Heart right ventricle (tissue), 16 donors: ENCODE measurements at regions of chr4 and their contacts with region 1.

Region 1: DNA sequence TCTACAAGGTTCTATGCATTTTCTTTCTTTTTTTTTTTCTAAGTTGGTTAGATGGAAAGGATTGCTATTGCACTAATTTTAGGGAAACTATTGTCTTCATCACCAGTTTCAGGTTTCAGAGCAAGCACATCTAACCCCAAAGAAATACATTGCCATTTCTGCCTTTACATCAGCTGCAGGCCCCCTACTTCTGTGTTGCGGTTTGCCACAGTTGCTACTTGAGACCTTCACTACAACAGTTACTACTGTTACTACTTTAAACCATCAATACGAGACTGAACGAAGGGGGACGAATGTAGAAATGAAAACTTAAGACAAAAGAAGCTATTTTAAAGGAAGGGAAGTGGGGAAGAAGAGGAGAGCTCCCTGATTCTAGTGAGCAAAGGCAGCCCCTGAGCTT is 256.7 kb upstream of the LCORL start:
- DNase-seq: no peak
- ATAC-seq: no peak
- H3K4me3 ChIP-seq: no peak overlapping the region
- H3K27ac ChIP-seq: no peak overlapping the region
- H3K4me1 ChIP-seq: no peaks in the 10 kb centered on the region
- H3K27me3 ChIP-seq: no peaks in the 10 kb centered on the region
- CTCF ChIP-seq: no peak

Region 2: GRCh38 chr4:18241727-18242126 is 36.5 kb before region 1 on chr4:
- intact Hi-C with region 1: loop called in 1 of 10 experiments (anchors 2 kb)
- DNase-seq: no peak
- ATAC-seq: no peak
- H3K4me3 ChIP-seq: no peak overlapping the region
- H3K27ac ChIP-seq: no peak overlapping the region
- H3K4me1 ChIP-seq: no peaks in the 10 kb centered on the region
- H3K27me3 ChIP-seq: no peaks in the 10 kb centered on the region
- CTCF ChIP-seq: no peak

Region 3: GRCh38 chr4:18366892-18367291 is 88.6 kb after region 1 on chr4:
- intact Hi-C with region 1: no loop called
- DNase-seq: no peak
- ATAC-seq: peak in 4 of 8 donors; percentile 15 to 53 (median 46)
- H3K4me3 ChIP-seq: no peak overlapping the region
- H3K27ac ChIP-seq: no peak overlapping the region
- H3K4me1 ChIP-seq: no peaks in the 10 kb centered on the region
- H3K27me3 ChIP-seq: no peaks in the 10 kb centered on the region
- CTCF ChIP-seq: peak in 8 of 9 donors; percentile 7 to 55 (median 50)

Region 4: DNA sequence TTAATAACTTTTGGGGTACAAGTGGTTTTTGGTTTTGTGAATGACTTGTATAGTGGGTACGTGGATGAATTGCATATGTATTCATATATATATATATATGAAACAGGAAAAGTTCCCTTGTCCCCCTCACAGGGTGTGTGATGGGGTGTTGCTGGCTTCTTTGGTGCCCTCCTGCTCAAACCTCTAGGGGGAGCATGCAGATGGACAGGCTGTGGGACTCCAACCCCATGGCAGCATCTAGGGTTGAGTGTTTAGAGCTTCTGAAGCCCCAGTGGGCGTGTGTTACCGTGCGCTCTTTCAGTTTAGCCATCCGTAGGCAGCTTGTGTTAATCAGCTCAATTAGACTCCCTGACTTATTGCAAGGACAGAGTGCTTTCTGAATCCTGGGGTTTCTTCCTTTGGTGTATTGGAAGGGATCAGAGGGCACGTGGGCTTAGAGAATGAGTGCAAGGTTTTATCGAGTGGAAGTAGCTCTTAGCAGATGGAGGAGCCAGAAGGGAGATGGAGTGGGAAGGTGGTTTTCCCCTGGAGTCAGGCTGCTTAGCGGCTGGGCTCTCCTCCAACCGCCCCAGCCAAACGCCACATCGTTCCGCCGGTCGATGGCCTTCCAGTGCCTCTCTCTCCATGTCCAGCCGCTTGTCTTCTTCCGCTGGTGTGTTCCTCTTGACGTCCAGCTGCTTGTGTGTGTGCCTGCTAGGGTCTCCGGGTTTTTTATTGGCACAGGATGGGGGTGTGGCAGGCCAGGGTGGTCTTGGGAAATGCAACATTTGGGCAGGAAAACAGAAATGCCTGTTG is 417.7 kb after region 1 on chr4:
- intact Hi-C with region 1: no loop called
- DNase-seq: no peak
- ATAC-seq: no peak
- H3K4me3 ChIP-seq: no peak overlapping the region
- H3K27ac ChIP-seq: no peak overlapping the region
- H3K4me1 ChIP-seq: peaks cover 0 to 4% (median 0%) of the 10 kb centered on the region in 9 donors
- H3K27me3 ChIP-seq: peaks cover 0 to 3% (median 0%) of the 10 kb centered on the region in 7 donors
- CTCF ChIP-seq: no peak